ENCODE measurements at regions of chr1 and their contacts with region 1.

Region 1: GRCh38 chr1:119743781-119744597 is 24.7 kb downstream of the HMGCS2 start:
- DNase-seq: peak; percentile 63
- ATAC-seq: peak; percentile 65

Region 2: DNA sequence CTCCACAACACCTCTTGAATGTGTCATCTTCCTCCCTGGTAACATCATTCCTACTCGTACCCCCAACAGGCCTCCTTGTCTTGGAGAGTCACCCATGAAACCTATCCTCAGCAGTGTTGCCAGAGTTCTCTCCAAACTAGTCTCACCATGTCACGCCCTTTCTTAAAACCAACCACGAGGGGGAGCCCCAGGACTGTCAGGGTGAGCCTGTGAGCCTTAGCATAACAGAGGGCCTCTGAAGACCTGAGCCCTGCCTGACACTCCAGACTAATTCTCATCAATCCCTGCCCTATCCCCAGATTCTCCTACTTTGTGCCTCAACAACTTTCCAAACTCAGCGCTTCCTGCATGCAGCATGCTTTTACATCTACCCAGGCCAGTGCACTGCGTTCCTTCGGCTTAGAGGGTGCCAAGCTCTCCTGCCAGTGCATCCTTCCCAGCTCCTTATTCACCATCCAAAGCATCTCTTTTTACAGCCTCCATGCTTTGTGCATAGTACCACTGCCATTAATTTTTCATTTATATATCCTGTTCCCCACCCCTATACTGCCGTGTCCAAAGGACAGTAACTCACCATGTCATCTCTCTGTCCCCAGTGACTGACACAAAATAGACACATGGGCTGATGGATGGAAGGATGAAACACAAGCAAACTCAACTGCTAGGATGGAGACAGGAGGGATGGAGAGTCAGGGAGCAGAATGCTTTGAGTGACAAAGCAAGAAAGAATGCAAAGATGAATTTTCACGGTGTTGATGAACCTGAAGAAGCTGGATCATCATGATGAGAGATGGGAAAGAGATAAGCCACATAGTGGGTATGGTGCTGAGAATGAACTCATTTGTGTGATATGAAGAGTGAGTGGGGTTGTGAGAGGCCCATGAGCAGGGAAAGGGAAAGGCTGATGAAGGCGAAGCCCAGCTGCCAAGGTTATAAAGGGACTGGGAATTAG is 129.9 kb before region 1 on chr1:
- intact Hi-C with region 1: no loop called
- DNase-seq: peak; percentile 81
- ATAC-seq: peak; percentile 91

Region 3: GRCh38 chr1:119808972-119809550 is 65.1 kb after region 1 on chr1:
- intact Hi-C with region 1: loop called (anchors 10 kb)
- DNase-seq: peak; percentile 78
- ATAC-seq: peak; percentile 82

Region 4: DNA sequence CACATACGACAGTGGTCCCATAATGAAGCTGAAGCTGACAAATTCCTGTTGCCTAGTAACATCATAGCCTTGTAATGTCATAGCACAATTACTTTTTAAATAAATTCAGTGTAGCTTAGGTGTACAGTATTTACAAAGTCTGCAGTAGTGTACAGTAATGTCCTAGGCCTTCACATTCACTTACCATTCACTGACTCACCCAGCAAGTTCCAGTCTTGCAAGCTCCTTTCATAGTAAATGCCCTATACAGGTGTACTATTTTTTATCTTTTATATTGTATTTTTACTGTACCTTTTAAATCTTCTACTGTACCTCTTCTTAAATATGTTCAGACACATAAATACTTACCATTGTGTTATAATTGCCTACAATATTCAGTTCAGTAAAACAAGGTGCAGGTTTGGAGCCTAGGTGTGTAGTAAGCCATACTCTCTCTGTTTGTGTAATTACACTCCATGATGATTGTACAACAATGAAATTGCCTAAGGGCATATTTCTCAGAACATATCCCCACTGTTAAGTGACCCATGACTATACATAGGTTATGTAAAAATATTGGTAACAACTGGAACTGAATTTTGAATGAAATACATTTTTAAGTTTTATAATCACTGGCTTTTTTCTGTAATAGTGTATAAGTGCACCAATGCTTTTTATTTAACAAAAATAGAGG is 185.8 kb after region 1 on chr1:
- intact Hi-C with region 1: loop called (anchors 10 kb)
- DNase-seq: no peak
- ATAC-seq: no peak